ENCODE measurements at regions of chr3 and their contacts with region 1.

Region 1: DNA sequence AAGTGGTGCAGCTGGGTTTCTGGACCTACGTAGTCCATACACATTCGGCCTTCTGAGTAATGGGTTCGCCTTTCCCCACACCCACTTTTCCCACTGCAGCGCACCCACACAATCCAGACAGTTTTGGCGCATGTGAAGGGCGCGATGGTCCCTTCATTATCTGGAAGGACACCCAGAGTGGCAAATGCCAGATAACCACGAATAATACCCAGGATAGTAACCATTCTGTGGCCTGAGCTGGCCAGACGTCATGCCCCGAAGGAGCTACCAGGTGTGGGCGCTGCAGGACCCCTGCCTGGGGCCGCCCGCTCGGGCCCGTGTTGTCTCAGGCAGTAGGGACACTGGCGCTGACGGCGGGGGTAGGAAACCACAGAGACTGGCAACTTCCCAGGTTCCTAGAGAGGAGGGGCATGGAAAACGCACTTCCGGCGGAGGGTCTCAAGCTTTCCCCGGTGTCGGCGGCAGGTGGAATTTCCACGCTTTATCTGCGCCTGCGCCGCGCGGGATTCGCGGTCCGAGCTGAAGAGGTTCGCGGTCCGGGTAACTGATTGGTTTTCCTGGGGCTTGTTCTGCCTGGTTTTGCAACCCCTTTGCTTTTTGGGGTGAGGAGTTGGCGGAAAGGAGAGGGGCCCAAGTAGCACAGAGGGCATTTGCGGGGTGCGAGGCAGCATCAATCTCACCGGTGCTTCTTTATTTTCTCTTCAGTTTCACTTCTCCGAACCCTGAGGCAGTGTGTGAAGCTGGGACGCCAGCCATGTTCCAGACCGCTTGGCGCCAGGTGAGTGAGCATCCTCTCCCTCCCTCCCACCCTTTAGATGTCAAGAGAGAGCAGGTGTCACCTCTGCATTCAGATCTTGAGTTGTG is at the start of gene ZNF620:
- DNase-seq: peak; percentile 69
- ATAC-seq: peak; percentile 62
- H3K4me3 ChIP-seq: peak within 1 kb of the TSS; percentile 72
- H3K27ac ChIP-seq: peak within 1 kb of the TSS; percentile 63
- H3K4me1 ChIP-seq: peaks cover 24% of the 10 kb centered on the region
- H3K27me3 ChIP-seq: no peaks in the 10 kb centered on the region
- CTCF ChIP-seq: peak; percentile 55
- total RNA-seq, gene ZNF620: 1.8 and 2.5 TPM in 2 replicates

Region 2: DNA sequence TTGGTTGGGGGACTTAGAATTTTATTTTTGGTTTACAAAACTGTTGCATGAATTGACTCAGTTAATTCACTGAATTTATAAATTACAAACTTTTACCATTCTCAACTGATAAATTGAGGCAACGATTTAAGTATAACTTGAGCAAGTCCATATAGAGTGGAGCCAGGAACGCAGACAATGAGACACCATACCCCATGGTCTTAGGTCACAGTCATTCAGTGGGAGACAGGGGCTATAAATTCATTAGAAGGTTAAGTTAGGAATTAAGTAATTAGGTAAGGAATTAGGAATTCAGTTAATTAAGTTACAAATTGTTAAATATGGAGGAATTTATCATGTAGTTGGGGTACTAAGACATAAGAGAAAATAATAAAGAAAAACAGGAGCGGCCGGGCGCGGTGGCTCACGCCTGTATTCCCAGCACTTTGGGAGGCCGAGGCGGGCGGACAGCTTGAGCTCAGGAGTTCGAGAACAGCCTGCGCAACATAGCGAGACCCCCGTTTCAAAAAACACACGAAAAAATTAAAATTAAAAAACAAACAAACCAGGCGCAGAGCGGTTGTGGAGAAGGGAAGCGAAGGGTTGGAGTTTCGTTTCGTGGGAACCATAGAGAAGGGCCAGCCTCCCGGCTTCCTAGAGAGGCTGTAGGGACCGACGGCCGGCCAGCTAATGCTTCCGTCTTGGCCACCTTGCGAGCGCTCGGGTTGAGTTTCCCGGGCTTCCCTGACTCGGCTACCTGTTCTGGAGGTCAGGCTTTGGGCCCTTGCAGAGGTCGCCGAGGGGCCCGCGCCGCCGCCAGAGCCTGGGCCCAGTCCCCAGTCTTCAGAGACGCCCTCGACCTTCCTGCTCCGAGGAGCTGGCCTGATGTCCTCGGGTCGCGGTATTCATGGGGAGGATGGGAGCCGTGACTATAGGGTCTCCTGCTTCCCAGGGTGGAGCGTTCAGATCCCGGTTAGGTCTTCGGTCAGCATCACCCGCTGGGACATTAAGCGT is 29.1 kb before region 1 on chr3 and contains the start of gene ZNF619:
- CTCF ChIA-PET with region 1: no interaction called
- POLR2A ChIA-PET with region 1: interaction called, 3 read pairs
- intact Hi-C with region 1: loop called (anchors 2 kb)
- DNase-seq: peak; percentile 75
- ATAC-seq: peak; percentile 90
- H3K4me3 ChIP-seq: peak within 1 kb of the TSS; percentile 82
- H3K27ac ChIP-seq: no peak within 1 kb of the TSS; the same call in 1 of the 2 replicates
- H3K4me1 ChIP-seq: peaks cover 5% of the 10 kb centered on the region; the same call in 1 of the 2 replicates
- H3K27me3 ChIP-seq: no peaks in the 10 kb centered on the region
- CTCF ChIP-seq: no peak
- total RNA-seq, gene ZNF619: 3.5 and 6.0 TPM in 2 replicates

Region 3: DNA sequence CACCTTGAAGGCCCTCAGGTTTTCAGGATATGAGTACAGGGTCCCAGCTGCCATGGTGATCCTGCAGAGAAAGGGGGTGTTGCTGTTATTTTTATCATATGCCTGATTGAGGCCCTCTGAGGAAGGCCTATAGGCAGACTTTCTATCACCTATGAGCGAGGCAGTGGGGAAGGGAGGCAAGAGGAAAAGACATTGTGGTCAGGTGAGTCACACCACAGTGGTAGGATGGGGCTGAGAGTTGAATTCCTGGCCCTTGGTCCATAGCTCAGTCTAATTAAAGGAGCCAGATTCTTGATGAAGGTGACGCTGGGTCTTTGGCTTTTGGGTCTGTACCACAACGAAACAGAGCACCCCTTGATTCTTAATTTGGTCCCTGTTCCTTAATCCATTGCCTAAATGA is 91.6 kb after region 1 on chr3:
- CTCF ChIA-PET with region 1: no interaction called
- POLR2A ChIA-PET with region 1: no interaction called
- intact Hi-C with region 1: no loop called
- DNase-seq: peak; percentile 51
- ATAC-seq: peak; percentile 60
- H3K4me3 ChIP-seq: no peak overlapping the region
- H3K27ac ChIP-seq: no peak overlapping the region
- H3K4me1 ChIP-seq: peaks cover 4% of the 10 kb centered on the region; the same call in 1 of the 2 replicates
- H3K27me3 ChIP-seq: peaks cover 33% of the 10 kb centered on the region; the same call in 1 of the 2 replicates
- CTCF ChIP-seq: no peak

Measured in PC-3 (cell line).